A549 (cell line): ENCODE measurements at regions of chr19 and their contacts with region 1.

Region 1: DNA sequence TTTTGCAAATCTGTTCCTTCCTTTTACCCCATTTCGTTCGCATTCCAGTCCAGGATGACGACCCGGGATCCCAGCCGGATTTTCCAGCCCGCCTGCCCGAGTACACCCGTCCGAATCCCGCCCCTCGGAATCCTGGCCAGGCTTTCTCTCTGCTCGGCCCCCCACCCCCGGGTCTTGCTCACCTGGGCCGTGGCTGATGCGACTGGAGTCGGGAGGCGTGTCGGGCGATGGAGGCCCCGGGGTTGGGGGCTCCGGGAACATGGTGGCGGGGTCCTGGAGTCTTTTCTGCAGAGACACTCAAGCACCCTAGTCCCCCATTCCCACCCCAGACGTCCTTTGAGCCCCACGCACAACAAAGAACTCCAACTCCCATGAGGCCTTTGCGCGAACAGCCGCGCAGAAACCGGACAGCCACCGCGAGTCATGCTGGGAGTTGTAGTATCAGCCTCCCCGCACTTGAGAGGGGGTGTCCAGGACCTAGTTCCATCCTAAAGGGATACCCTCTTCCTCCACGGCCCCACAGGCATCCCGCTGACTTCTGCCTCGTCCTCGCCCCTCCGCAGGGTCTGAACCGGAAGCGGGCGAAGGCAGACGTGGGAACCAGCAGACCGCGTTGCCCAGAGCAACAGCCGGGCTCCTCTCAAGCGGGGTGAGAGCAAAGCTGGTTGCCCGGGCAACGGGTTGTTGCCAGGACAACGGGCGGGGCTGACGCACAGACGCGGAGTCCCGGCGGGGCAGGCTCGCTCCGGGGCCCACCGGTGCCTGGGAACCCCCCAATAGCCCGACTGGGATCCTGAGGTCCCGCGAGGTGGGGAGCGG is 1.1 kb downstream of the SYT5 start:
- DNase-seq: peak; percentile 91
- ATAC-seq: peak; percentile 74 to 80
- H3K4me3 ChIP-seq: peak overlapping the region; percentile 26
- H3K27ac ChIP-seq: no peak overlapping the region; a peak in 1 of 6 replicates
- H3K4me1 ChIP-seq: peaks cover 17% of the 10 kb centered on the region
- CTCF ChIP-seq: no peak
- EP300 ChIP-seq: no peak
- POLR2A ChIP-seq: no peak
- RAD21 ChIP-seq: no peak

Region 2: GRCh38 chr19:55197531-55197930 is 18.5 kb after region 1 on chr19:
- CTCF ChIA-PET with region 1: interaction called, 13 read pairs
- POLR2A ChIA-PET with region 1: interaction called, 3 read pairs
- DNase-seq: peak in 1 of 2 experiments; percentile 63
- ATAC-seq: peak; percentile 68 to 78
- H3K4me3 ChIP-seq: no peak overlapping the region
- H3K27ac ChIP-seq: no peak overlapping the region
- H3K4me1 ChIP-seq: no peaks in the 10 kb centered on the region
- CTCF ChIP-seq: no peak
- EP300 ChIP-seq: no peak
- POLR2A ChIP-seq: no peak
- RAD21 ChIP-seq: no peak